ENCODE measurements at regions of chr21 and their contacts with region 1.

Region 1: GRCh38 chr21:29365661-29366265 is 67.0 kb downstream of the BACH1 start:
- DNase-seq: no peak
- ATAC-seq: no peak
- H3K4me3 ChIP-seq: no peak overlapping the region
- H3K27ac ChIP-seq: no peak overlapping the region
- H3K4me1 ChIP-seq: 0 out of 2 replicates have a peak, but pooled peaks cover 6% of the 10 kb centered on the region
- H3K27me3 ChIP-seq: no peaks in the 10 kb centered on the region
- CTCF ChIP-seq: no peak
- EP300 ChIP-seq: no peak
- POLR2A ChIP-seq: no peak
- RAD21 ChIP-seq: no peak

Region 2: GRCh38 chr21:28633839-28634555 is 731.8 kb before region 1 on chr21:
- CTCF ChIA-PET with region 1: no interaction called
- POLR2A ChIA-PET with region 1: no interaction called
- in situ Hi-C with region 1: no loop called
- intact Hi-C with region 1: no loop called
- DNase-seq: no peak
- ATAC-seq: no peak
- H3K4me3 ChIP-seq: no peak overlapping the region
- H3K27ac ChIP-seq: no peak overlapping the region
- H3K4me1 ChIP-seq: no peaks in the 10 kb centered on the region
- H3K27me3 ChIP-seq: no peaks in the 10 kb centered on the region
- CTCF ChIP-seq: no peak
- EP300 ChIP-seq: no peak
- POLR2A ChIP-seq: no peak
- RAD21 ChIP-seq: no peak

Region 3: DNA sequence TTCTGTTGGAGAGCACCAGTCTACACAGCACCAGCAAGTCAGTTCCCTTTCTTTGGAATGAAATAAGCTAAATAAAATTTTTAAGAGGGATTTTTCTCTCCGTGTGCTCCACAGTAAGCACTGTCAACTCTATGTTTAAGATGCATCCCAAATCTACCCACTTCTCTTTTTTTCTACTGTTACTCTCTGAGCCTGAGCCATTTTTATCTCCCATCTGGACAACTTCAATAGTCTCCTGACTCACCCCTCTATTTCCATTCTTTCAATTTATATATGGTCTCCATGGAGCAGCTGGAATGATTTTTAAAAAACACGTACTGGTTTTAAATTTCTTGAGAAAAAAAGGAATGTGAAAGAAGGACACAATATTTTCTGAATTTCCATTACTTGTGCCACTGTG is 267.6 kb before region 1 on chr21:
- CTCF ChIA-PET with region 1: no interaction called
- POLR2A ChIA-PET with region 1: no interaction called
- in situ Hi-C with region 1: loop called (anchors 5 kb)
- intact Hi-C with region 1: no loop called
- DNase-seq: no peak
- ATAC-seq: no peak
- H3K4me3 ChIP-seq: no peak overlapping the region
- H3K27ac ChIP-seq: no peak overlapping the region
- H3K4me1 ChIP-seq: no peaks in the 10 kb centered on the region
- H3K27me3 ChIP-seq: no peaks in the 10 kb centered on the region
- CTCF ChIP-seq: no peak
- EP300 ChIP-seq: no peak
- POLR2A ChIP-seq: no peak
- RAD21 ChIP-seq: no peak